ENCODE measurements at regions of chr15 and their contacts with region 1.

Region 1: GRCh38 chr15:79853458-79854328 is 43.1 kb downstream of the MTHFS start:
- DNase-seq: peak; percentile 90
- ATAC-seq: peak; percentile 99
- H3K4me3 ChIP-seq: no peak overlapping the region
- H3K27ac ChIP-seq: no peak overlapping the region
- H3K4me1 ChIP-seq: peaks cover 7% of the 10 kb centered on the region
- H3K27me3 ChIP-seq: no peaks in the 10 kb centered on the region
- CTCF ChIP-seq: peak; percentile 94

Region 2: GRCh38 chr15:79380755-79381497 is 472.8 kb before region 1 on chr15:
- CTCF ChIA-PET with region 1: interaction called, 11 read pairs
- POLR2A ChIA-PET with region 1: interaction called, 3 read pairs
- intact Hi-C with region 1: loop called (anchors 1 kb)
- DNase-seq: peak; percentile 79
- ATAC-seq: peak; percentile 92
- H3K4me3 ChIP-seq: no peak overlapping the region
- H3K27ac ChIP-seq: no peak overlapping the region
- H3K4me1 ChIP-seq: no peaks in the 10 kb centered on the region
- H3K27me3 ChIP-seq: no peaks in the 10 kb centered on the region
- CTCF ChIP-seq: peak; percentile 93

Region 3: DNA sequence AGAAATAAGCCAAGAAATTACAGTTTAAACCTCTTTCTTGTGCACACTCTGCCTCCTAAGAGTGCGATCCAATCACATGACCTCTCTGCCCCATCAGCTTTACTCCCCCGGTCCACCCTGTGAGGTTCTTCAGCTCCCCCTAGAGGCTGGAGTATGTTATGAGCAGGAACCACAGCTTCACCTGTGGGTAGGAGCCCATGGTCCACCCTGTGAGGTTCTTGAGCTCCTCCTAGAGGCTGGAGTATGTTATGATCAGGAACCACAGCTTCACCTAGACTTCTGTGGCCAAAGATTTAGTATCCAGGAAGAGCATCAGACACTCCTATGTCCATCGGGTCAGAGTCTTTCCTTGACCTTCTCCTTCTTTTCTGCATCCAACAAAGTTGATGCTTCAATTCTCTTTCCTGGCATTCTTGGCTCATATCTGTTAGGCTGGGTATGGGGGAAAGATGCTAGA is 257.6 kb before region 1 on chr15:
- CTCF ChIA-PET with region 1: no interaction called
- POLR2A ChIA-PET with region 1: no interaction called
- intact Hi-C with region 1: loop called (anchors 10 kb)
- DNase-seq: peak; percentile 94
- ATAC-seq: peak; percentile 90
- H3K4me3 ChIP-seq: no peak overlapping the region
- H3K27ac ChIP-seq: no peak overlapping the region
- H3K4me1 ChIP-seq: no peaks in the 10 kb centered on the region
- H3K27me3 ChIP-seq: peaks cover 17% of the 10 kb centered on the region
- CTCF ChIP-seq: peak; percentile 97

Region 4: DNA sequence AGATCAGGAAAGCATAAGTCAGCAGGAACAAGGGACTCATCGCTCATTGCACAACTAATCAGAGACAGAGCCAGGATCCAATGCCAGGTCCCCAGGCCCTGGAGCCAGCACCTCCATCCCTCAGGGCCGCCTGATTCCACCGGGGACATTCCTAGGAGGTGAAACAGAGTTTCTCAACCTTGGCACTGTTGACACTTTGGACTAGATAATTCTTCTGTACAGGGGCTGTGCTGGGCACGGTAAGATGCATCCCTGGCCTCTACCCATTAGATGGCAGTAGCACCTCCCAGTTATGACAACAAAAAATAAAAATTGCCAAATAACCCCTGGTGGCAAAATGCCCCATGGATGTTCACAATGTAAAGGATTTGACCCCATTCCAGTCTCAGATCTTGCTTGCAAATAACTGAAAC is 84.6 kb before region 1 on chr15:
- CTCF ChIA-PET with region 1: no interaction called
- POLR2A ChIA-PET with region 1: no interaction called
- intact Hi-C with region 1: loop called (anchors 5 kb)
- DNase-seq: peak; percentile 71
- ATAC-seq: peak; percentile 55
- H3K4me3 ChIP-seq: no peak overlapping the region
- H3K27ac ChIP-seq: no peak overlapping the region
- H3K4me1 ChIP-seq: peaks cover 6% of the 10 kb centered on the region; the same call in 1 of the 2 replicates
- H3K27me3 ChIP-seq: peaks cover 40% of the 10 kb centered on the region
- CTCF ChIP-seq: peak; percentile 71

Region 5: GRCh38 chr15:79989682-79990081 is 136.0 kb after region 1 on chr15:
- CTCF ChIA-PET with region 1: no interaction called
- POLR2A ChIA-PET with region 1: no interaction called
- intact Hi-C with region 1: loop called (anchors 5 kb)
- DNase-seq: no peak
- ATAC-seq: no peak
- H3K4me3 ChIP-seq: no peak overlapping the region
- H3K27ac ChIP-seq: no peak overlapping the region
- H3K4me1 ChIP-seq: peaks cover 4% of the 10 kb centered on the region
- H3K27me3 ChIP-seq: no peaks in the 10 kb centered on the region
- CTCF ChIP-seq: no peak

Region 6: DNA sequence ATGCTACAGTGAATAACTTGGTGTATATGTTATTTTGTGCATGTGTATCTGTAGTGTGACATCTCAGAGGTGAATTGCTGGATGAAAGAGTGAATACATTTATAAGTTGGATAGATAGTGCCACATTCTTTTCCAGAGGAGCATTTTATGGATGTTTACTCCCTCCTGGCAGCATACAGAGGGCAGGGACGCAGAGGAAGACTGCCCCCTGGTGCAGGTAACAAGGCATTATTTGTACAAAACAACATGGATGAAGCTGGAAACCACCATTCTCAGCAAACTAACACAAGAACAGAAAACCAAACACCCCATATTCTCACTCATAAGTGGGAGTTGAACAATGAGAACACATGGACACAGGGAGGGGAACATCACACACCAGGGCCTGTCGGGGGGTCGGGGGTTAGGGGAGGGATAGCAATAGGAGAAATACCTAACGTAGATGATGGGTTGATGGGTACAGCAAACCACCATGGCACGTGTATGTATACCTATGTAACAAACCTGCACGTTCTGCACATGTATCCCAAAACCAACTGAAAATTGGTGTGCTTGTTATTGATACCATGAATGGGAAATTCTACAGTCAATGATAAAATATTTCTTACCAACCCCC is 456.2 kb after region 1 on chr15:
- CTCF ChIA-PET with region 1: no interaction called
- POLR2A ChIA-PET with region 1: no interaction called
- intact Hi-C with region 1: loop called (anchors 5 kb)
- DNase-seq: peak; percentile 57
- ATAC-seq: peak; percentile 74
- H3K4me3 ChIP-seq: no peak overlapping the region
- H3K27ac ChIP-seq: no peak overlapping the region
- H3K4me1 ChIP-seq: no peaks in the 10 kb centered on the region
- H3K27me3 ChIP-seq: peaks cover 28% of the 10 kb centered on the region
- CTCF ChIP-seq: peak; percentile 66